A549 (cell line): ENCODE measurements at regions of chr17 and their contacts with region 1.

Region 1: GRCh38 chr17:38584350-38584925 is 21.3 kb downstream of the SRCIN1 start:
- DNase-seq: peak; percentile 80 to 92
- ATAC-seq: peak; percentile 79 to 91
- H3K4me3 ChIP-seq: peak overlapping the region; percentile 24; the same call in 1 of the 3 replicates
- H3K27ac ChIP-seq: peak overlapping the region; percentile 51 to 63; a peak in 5 of 6 replicates
- H3K4me1 ChIP-seq: peaks cover 28% of the 10 kb centered on the region
- CTCF ChIP-seq: peak; percentile 99
- EP300 ChIP-seq: no peak
- POLR2A ChIP-seq: no peak
- RAD21 ChIP-seq: peak; percentile 88 to 93

Region 2: DNA sequence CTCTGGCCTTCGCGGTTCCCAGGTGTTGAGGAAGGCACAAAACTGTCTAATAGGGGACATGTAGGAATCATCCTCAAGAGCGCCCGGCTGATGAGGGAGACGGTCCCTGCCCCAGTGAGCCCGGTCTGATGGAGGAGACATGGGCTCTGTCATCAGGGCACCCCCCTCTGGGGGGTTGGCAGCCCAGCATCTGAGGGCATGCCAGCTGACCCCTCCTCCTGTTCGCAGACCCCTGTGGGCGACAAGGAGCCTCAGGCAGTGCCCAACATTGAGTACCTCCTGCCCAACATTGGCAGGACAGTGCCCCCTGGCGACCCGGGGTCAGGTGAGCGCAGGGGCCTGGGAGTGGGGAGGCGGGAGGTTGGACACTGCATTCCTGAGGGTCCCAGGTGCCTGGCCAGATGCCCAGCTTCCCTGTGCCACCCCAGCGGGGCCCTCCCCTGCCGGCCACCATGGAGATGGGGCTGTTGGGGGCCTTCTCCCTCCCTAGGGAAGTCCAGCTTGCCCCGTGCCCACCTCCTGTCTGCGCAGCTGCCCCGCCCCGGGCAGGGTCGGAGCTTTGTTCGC is 86.2 kb before region 1 on chr17:
- CTCF ChIA-PET with region 1: interaction called, 14 read pairs
- POLR2A ChIA-PET with region 1: no interaction called
- DNase-seq: no peak
- ATAC-seq: no peak
- H3K4me3 ChIP-seq: no peak overlapping the region
- H3K27ac ChIP-seq: no peak overlapping the region
- H3K4me1 ChIP-seq: no peaks in the 10 kb centered on the region
- CTCF ChIP-seq: no peak
- EP300 ChIP-seq: no peak
- POLR2A ChIP-seq: no peak
- RAD21 ChIP-seq: no peak

Region 3: GRCh38 chr17:38572669-38573365 is 11.6 kb before region 1 on chr17:
- CTCF ChIA-PET with region 1: interaction called, 948 read pairs
- POLR2A ChIA-PET with region 1: no interaction called
- DNase-seq: peak; percentile 23 to 87
- ATAC-seq: peak; percentile 22 to 58; a peak in 5 of 6 replicates
- H3K4me3 ChIP-seq: peak overlapping the region; percentile 61
- H3K27ac ChIP-seq: peak overlapping the region; percentile 53 to 83; a peak in 5 of 6 replicates
- H3K4me1 ChIP-seq: peaks cover 12% of the 10 kb centered on the region
- CTCF ChIP-seq: no peak
- EP300 ChIP-seq: no peak
- POLR2A ChIP-seq: no peak
- RAD21 ChIP-seq: no peak

Region 4: DNA sequence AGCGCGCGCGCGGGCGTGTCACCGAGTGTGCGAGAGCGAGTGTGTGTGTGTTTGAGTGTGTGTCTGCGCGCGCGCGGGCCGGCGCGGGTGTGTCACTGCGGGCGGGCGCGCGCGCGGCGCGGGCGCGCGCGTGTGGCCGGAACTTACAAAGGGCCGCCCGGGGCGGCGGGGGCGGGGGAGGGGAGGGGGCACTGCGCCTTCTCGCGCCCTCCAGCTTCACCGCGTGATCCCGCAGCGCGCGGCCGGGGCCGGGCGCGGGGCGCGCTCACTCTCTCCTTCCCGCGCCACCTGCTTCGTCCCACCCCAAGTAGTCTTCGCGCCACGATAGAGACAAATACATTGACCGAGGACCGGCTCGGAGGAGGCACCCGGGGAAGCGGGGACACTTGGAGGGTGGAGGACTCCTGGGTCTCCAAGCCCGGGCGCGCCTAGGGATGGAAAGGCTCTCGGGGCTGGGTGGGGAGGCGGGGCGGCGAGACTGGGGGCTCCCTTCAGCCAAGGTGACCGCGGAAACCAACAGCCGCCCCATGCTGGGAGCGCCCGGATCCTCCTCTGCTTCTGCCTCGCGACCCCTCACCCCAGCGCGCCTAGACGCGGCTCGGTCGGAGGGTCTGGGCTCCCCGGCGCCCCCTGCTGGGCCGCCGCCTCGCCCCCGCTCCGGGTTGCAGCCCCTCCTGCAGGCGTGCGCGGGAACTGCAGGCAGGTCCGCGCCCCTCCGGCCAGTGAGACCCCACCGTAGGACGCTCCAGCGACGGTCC is 21.6 kb after region 1 on chr17 and contains the start of gene SRCIN1:
- CTCF ChIA-PET with region 1: interaction called, 525 read pairs
- POLR2A ChIA-PET with region 1: interaction called, 3 read pairs
- DNase-seq: peak; percentile 70
- ATAC-seq: peak; percentile 21 to 66
- H3K4me3 ChIP-seq: peak within 1 kb of the TSS; percentile 71
- H3K27ac ChIP-seq: peak within 1 kb of the TSS; percentile 76 to 93
- H3K4me1 ChIP-seq: peaks cover 25% of the 10 kb centered on the region
- CTCF ChIP-seq: peak; percentile 100
- EP300 ChIP-seq: no peak
- POLR2A ChIP-seq: peak; percentile 42
- RAD21 ChIP-seq: peak; percentile 44 to 66
- polyA plus RNA-seq, gene SRCIN1: 1.3 and 1.4 TPM in 2 replicates